Natural killer cell (primary cell): ENCODE measurements at regions of chr6 and their contacts with region 1.

Region 1: GRCh38 chr6:41787219-41787917 is at the start of gene TOMM6:
- DNase-seq: peak; percentile 93 to 97
- ATAC-seq: peak; percentile 79 to 92 (median 84)
- H3K4me3 ChIP-seq: peak within 1 kb of the TSS; percentile 86
- H3K4me3 Mint-ChIP-seq: peak within 1 kb of the TSS; percentile 94
- H3K27ac ChIP-seq: peak within 1 kb of the TSS; percentile 92
- H3K27ac Mint-ChIP-seq: peak within 1 kb of the TSS; percentile 92 to 96
- H3K4me1 ChIP-seq: peaks cover 30% of the 10 kb centered on the region
- H3K4me1 Mint-ChIP-seq: peaks cover 0 to 25% of the 10 kb centered on the region in 2 donors
- H3K27me3 ChIP-seq: no peaks in the 10 kb centered on the region
- H3K27me3 Mint-ChIP-seq: no peaks in the 10 kb centered on the region
- CTCF ChIP-seq: peak; percentile 95
- total RNA-seq, gene TOMM6: 95.0 to 109 (median 96.6) TPM

Region 2: GRCh38 chr6:41379306-41379705 is 408.1 kb before region 1 on chr6:
- intact Hi-C with region 1: no loop called
- DNase-seq: no peak
- ATAC-seq: no peak
- H3K4me3 ChIP-seq: no peak overlapping the region
- H3K4me3 Mint-ChIP-seq: no peak overlapping the region
- H3K27ac ChIP-seq: no peak overlapping the region
- H3K27ac Mint-ChIP-seq: no peak overlapping the region
- H3K4me1 ChIP-seq: peaks cover 3% of the 10 kb centered on the region
- H3K4me1 Mint-ChIP-seq: peaks cover 5 to 8% of the 10 kb centered on the region in 2 donors
- H3K27me3 ChIP-seq: peaks cover 32% of the 10 kb centered on the region
- H3K27me3 Mint-ChIP-seq: peaks cover 59 to 89% of the 10 kb centered on the region in 2 donors
- CTCF ChIP-seq: no peak

Region 3: DNA sequence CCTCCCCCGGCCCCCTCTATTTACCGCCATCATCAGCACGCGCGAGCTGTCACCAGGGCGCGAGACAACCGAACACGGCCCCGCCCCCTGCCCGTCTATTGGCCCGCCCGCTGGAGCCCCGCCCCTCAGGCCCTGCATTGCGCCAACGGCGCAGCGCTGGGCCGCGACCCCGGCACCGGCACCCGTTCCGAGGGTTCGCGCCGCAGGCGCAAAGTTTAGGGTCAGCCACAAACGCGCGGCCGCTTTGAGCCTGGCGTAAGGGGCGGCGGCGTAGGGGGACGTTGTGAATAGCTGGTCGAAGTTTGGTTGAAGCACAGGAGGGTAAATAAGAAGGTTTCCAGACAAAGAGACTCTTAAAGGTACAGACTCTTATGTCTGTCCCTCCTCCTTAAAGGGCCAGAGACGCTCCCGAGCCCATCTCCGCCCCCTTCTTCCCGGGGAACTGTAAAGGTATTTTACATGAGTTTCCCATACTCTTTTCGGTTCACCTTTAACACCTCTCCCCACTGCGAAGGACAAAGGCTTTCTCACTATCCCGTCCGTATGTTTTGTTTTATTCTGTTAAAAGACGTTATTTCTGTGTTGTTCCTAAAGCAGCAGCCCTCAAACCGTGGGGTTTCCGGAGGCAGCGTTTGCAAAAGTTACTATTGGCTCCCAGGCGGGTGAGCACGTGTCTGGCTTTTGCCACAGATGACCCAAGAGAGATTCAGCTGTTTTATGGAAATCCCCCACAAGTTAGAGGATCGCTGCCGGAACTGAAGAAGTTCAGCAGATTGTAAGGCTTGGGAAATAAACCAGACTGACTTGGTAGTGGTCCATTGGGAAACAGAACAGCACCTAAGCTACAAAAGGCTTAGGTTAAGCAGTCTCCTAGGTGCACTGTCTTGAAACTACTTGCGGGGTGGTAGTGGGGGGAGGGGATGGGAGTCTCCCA is 108.2 kb after region 1 on chr6 and contains the start of gene USP49:
- intact Hi-C with region 1: loop called (anchors 1 kb)
- DNase-seq: peak; percentile 92 to 95
- ATAC-seq: peak; percentile 88 to 96 (median 90)
- H3K4me3 ChIP-seq: peak within 1 kb of the TSS; percentile 86
- H3K4me3 Mint-ChIP-seq: no peak within 1 kb of the TSS
- H3K27ac ChIP-seq: peak within 1 kb of the TSS; percentile 85
- H3K27ac Mint-ChIP-seq: no peak within 1 kb of the TSS
- H3K4me1 ChIP-seq: peaks cover 14% of the 10 kb centered on the region
- H3K4me1 Mint-ChIP-seq: peaks cover 11 to 13% of the 10 kb centered on the region in 2 donors
- H3K27me3 ChIP-seq: no peaks in the 10 kb centered on the region
- H3K27me3 Mint-ChIP-seq: no peaks in the 10 kb centered on the region
- CTCF ChIP-seq: no peak
- total RNA-seq, gene USP49: 6.4 to 15.1 (median 11.5) TPM

Region 4: DNA sequence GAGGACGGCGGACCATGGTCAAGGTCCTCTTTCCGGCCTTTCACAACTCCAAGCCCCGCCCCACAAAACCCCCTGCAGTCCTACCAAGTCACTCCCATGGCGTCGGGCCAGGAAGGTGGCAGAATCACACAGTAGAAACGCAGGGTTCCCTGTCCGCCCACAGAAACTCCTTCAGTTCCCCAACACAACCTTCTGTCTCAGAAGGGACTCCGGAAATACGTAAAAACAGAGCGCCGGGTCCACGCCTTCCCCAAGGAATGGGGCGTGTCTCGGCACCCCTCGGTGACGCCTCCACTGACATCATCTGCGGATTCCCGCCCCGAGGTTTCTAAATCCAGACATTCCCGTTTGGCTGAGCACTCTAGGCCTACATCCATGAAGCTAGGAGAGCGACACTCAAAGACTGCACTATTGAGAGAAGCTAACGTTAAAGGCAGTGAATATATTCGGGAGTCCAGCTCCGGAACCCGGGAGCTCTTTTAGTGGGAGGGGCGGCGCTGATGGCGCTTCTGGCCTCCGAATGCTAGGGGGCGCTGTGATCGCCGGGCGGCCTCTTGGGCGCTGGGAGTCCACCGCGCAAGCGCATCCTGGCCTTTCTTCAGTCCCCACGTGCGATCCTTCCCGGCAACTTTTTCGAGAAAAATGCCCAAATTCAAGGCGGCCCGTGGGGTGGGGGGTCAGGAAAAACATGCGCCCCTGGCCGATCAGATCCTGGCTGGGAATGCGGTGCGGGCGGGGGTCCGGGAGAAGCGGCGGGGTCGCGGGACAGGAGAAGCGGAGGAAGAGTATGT is 133.7 kb after region 1 on chr6 and contains the starts of genes BYSL and MED20:
- intact Hi-C with region 1: loop called (anchors 1 kb)
- DNase-seq: peak; percentile 96 to 97
- ATAC-seq: peak; percentile 90 to 95 (median 92)
- H3K4me3 ChIP-seq: peak within 1 kb of the TSS; percentile 94
- H3K4me3 Mint-ChIP-seq: peak within 1 kb of the TSS; percentile 96
- H3K27ac ChIP-seq: peak within 1 kb of the TSS; percentile 96
- H3K27ac Mint-ChIP-seq: peak within 1 kb of the TSS; percentile 98
- H3K4me1 ChIP-seq: peaks cover 33% of the 10 kb centered on the region
- H3K4me1 Mint-ChIP-seq: peaks cover 57 to 60% of the 10 kb centered on the region in 2 donors
- H3K27me3 ChIP-seq: no peaks in the 10 kb centered on the region
- H3K27me3 Mint-ChIP-seq: no peaks in the 10 kb centered on the region
- CTCF ChIP-seq: peak; percentile 91
- total RNA-seq, gene BYSL: 5.4 to 11.6 (median 5.7) TPM
- total RNA-seq, gene MED20: 6.4 to 15.2 (median 15.0) TPM

Region 5: GRCh38 chr6:41976794-41977484 is 189.6 kb after region 1 on chr6:
- intact Hi-C with region 1: no loop called
- DNase-seq: no peak
- ATAC-seq: no peak
- H3K4me3 ChIP-seq: no peak overlapping the region
- H3K4me3 Mint-ChIP-seq: peak overlapping the region; percentile 17
- H3K27ac ChIP-seq: no peak overlapping the region
- H3K27ac Mint-ChIP-seq: peak overlapping the region; percentile 62 to 71
- H3K4me1 ChIP-seq: peaks cover 78% of the 10 kb centered on the region
- H3K4me1 Mint-ChIP-seq: peaks cover 61 to 77% of the 10 kb centered on the region in 2 donors
- H3K27me3 ChIP-seq: no peaks in the 10 kb centered on the region
- H3K27me3 Mint-ChIP-seq: no peaks in the 10 kb centered on the region
- CTCF ChIP-seq: no peak

Region 6: GRCh38 chr6:42217519-42218367 is 430.4 kb after region 1 on chr6 and contains the start of gene MRPS10:
- intact Hi-C with region 1: loop called (anchors 2 kb)
- DNase-seq: peak; percentile 83 to 95
- ATAC-seq: peak; percentile 100
- H3K4me3 ChIP-seq: peak within 1 kb of the TSS; percentile 81
- H3K4me3 Mint-ChIP-seq: peak within 1 kb of the TSS; percentile 100
- H3K27ac ChIP-seq: peak within 1 kb of the TSS; percentile 66
- H3K27ac Mint-ChIP-seq: peak within 1 kb of the TSS; percentile 97 to 98
- H3K4me1 ChIP-seq: peaks cover 21% of the 10 kb centered on the region
- H3K4me1 Mint-ChIP-seq: peaks cover 11 to 19% of the 10 kb centered on the region in 2 donors
- H3K27me3 ChIP-seq: no peaks in the 10 kb centered on the region
- H3K27me3 Mint-ChIP-seq: no peaks in the 10 kb centered on the region
- CTCF ChIP-seq: no peak
- total RNA-seq, gene MRPS10: 21.8 to 25.4 (median 22.6) TPM